Activated B cell treated with CpG ODN at 0.5 μM for 24 hours (primary cell): ENCODE measurements at regions of chr1 and their contacts with region 1.

Region 1: DNA sequence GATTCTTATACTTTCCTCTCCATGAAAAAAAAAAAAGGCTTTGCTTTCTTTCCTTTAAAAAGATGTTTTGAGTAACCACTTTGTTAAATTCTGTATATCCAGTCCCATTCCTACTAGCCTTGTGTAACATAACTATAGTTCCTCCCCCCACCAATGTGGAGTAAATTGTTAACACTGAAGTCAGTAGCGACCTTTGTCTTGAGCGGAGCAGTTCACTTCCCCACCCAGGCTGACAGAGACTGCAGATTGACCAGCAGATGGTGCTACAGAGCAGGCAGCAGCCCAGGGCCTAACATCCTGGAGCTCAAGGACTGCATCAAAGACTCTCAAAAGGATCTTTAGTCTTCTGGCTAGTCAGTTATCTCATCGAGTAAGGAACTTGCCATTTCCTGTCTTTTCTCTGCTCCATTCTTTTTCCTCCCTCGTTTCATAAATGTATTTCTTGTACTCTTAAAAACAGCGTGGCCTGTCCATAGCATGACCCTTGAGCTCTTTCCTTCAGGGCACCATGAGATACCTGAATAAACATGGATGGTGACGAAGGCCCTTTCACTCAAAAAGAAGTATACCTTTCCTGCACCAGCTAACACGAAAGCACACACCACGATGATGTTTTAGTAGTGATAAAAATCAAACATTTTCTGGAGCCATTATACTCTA is 503.5 kb upstream of the PKN2 start:
- DNase-seq: peak; percentile 25
- ATAC-seq: peak; percentile 97
- H3K4me3 Mint-ChIP-seq: no peak overlapping the region
- H3K27ac Mint-ChIP-seq: no peak overlapping the region
- H3K4me1 Mint-ChIP-seq: peaks cover 3% of the 10 kb centered on the region
- H3K27me3 Mint-ChIP-seq: peaks cover 3% of the 10 kb centered on the region
- CTCF ChIP-seq: peak; percentile 56

Region 2: DNA sequence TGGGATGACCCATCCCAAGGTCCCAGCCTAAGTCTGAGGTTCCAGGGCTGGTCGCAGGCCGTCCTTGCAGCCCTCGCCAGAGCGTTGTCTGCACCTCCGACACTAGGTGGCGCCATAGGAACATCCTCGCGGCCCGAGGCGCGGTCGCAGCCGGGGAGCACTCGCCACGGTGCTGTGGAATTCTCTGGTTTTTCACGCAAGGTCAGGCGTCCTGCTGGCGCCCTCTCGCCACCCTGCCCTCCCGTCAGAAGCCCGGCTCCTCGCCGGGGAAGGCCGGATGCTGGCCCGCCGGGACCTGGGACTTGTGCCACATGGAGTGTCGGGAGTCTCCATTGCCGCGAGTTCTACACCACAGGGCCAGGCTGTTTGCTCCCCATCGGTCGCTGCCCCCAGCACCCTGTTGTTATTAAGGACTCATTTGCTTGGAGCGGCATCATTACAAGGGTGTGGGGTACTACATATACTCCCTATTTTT is 1048.7 kb before region 1 on chr1:
- CTCF ChIA-PET with region 1: no interaction called
- POLR2A ChIA-PET with region 1: no interaction called
- intact Hi-C with region 1: loop called (anchors 10 kb)
- DNase-seq: peak; percentile 66
- ATAC-seq: peak; percentile 97
- H3K4me3 Mint-ChIP-seq: peak overlapping the region; percentile 85
- H3K27ac Mint-ChIP-seq: no peak overlapping the region
- H3K4me1 Mint-ChIP-seq: peaks cover 10% of the 10 kb centered on the region
- H3K27me3 Mint-ChIP-seq: peaks cover 23% of the 10 kb centered on the region
- CTCF ChIP-seq: peak; percentile 74

Region 3: DNA sequence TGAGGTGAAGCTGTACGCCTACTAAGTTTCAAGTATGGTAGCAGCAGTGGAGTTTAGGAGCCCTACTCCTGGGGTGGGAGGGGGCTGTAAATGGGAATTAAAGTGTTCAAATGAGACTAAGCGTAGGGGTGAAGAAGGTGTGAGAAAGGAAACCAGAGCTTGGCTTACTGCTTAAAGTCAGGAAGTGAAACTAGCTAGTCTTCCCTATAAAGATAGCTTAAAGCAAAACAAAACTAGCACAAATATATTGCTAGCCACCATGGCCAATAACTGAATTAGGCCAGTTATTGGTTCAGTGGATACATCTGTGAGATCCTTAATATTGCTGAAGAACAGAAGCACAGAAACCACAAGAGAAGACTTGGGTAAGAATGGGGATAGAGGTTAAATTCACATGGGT is 11.3 kb after region 1 on chr1:
- CTCF ChIA-PET with region 1: interaction called, 22 read pairs
- POLR2A ChIA-PET with region 1: no interaction called
- intact Hi-C with region 1: no loop called
- DNase-seq: no peak
- ATAC-seq: peak; percentile 89
- H3K4me3 Mint-ChIP-seq: peak overlapping the region; percentile 69
- H3K27ac Mint-ChIP-seq: peak overlapping the region; percentile 92
- H3K4me1 Mint-ChIP-seq: peaks cover 51% of the 10 kb centered on the region
- H3K27me3 Mint-ChIP-seq: no peaks in the 10 kb centered on the region
- CTCF ChIP-seq: no peak

Region 4: DNA sequence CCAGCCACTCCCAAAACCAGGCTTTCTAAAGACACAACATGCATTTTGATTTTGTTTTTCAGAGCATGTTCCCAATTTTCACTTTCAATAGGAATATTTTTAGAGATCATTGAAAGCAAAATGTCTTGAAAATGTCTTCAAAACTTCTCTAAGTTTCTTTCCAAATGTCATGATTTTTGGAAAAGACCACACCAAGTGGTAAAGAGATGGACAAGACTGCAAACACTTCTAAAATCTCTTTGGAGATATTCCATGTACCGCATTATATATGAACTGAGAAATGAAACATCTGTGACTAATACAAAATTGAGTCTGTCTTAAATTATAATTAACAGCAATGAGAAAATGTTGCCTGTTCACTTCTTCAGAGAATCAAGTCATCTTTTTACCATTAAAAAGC is 85.5 kb after region 1 on chr1:
- CTCF ChIA-PET with region 1: no interaction called
- POLR2A ChIA-PET with region 1: no interaction called
- intact Hi-C with region 1: no loop called
- DNase-seq: no peak
- ATAC-seq: no peak
- H3K4me3 Mint-ChIP-seq: no peak overlapping the region
- H3K27ac Mint-ChIP-seq: no peak overlapping the region
- H3K4me1 Mint-ChIP-seq: no peaks in the 10 kb centered on the region
- H3K27me3 Mint-ChIP-seq: peaks cover 3% of the 10 kb centered on the region
- CTCF ChIP-seq: no peak

Region 5: GRCh38 chr1:88302843-88303486 is 122.4 kb after region 1 on chr1:
- CTCF ChIA-PET with region 1: interaction called, 15 read pairs
- POLR2A ChIA-PET with region 1: no interaction called
- intact Hi-C with region 1: loop called (anchors 1 kb)
- DNase-seq: no peak
- ATAC-seq: no peak
- H3K4me3 Mint-ChIP-seq: no peak overlapping the region
- H3K27ac Mint-ChIP-seq: no peak overlapping the region
- H3K4me1 Mint-ChIP-seq: no peaks in the 10 kb centered on the region
- H3K27me3 Mint-ChIP-seq: peaks cover 6% of the 10 kb centered on the region
- CTCF ChIP-seq: no peak

Region 6: GRCh38 chr1:88595355-88596002 is 414.9 kb after region 1 on chr1:
- CTCF ChIA-PET with region 1: interaction called, 12 read pairs
- POLR2A ChIA-PET with region 1: no interaction called
- intact Hi-C with region 1: loop called (anchors 1 kb)
- DNase-seq: no peak
- ATAC-seq: no peak
- H3K4me3 Mint-ChIP-seq: no peak overlapping the region
- H3K27ac Mint-ChIP-seq: no peak overlapping the region
- H3K4me1 Mint-ChIP-seq: no peaks in the 10 kb centered on the region
- H3K27me3 Mint-ChIP-seq: peaks cover 8% of the 10 kb centered on the region
- CTCF ChIP-seq: no peak